Activated CD4-positive, alpha-beta T cell treated with anti-CD3 and anti-CD28 coated beads, Interleukin-2, amount 10 ng/mL, durations not matched to agents 24 days and 14 days (primary cell): ENCODE measurements at regions of chr12 and their contacts with region 1.

Region 1: GRCh38 chr12:2890388-2891239 is at the start of gene TULP3:
- DNase-seq: peak; percentile 99
- H3K4me3 Mint-ChIP-seq: peak within 1 kb of the TSS; percentile 99
- H3K27ac Mint-ChIP-seq: peak within 1 kb of the TSS; percentile 94
- H3K4me1 Mint-ChIP-seq: peaks cover 32% of the 10 kb centered on the region
- H3K27me3 Mint-ChIP-seq: peaks cover 3% of the 10 kb centered on the region
- total RNA-seq, gene TULP3: 7.6 and 7.8 TPM in 2 replicates

Region 2: GRCh38 chr12:2794736-2795289 is 95.8 kb before region 1 on chr12 and contains the start of gene FKBP4:
- intact Hi-C with region 1: loop called (anchors 1 kb)
- DNase-seq: peak; percentile 97
- H3K4me3 Mint-ChIP-seq: peak within 1 kb of the TSS; percentile 86
- H3K27ac Mint-ChIP-seq: peak within 1 kb of the TSS; percentile 79
- H3K4me1 Mint-ChIP-seq: peaks cover 28% of the 10 kb centered on the region
- H3K27me3 Mint-ChIP-seq: peaks cover 19% of the 10 kb centered on the region
- total RNA-seq, gene FKBP4: 300 and 311 TPM in 2 replicates

Region 3: DNA sequence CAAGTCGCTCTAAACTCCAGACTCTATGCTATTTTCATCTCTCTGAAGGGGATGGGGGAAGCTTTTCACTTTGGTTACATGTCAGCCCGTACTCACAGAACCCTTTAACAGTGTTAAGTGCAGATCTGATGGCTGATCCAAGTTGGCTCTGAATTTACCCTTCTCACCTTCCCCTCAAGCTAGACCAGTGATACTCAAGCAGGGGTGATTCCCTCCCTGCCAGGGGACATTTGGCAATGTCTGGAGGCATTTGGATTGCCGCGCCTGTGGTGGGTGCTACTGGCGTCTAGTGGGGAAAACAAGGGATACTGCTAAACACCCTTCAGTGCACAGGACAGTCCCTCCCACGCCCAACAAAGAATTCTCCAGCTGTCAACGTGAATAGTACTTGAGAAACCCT is 27.7 kb before region 1 on chr12:
- intact Hi-C with region 1: loop called (anchors 2 kb)
- DNase-seq: no peak
- H3K4me3 Mint-ChIP-seq: no peak overlapping the region
- H3K27ac Mint-ChIP-seq: no peak overlapping the region
- H3K4me1 Mint-ChIP-seq: peaks cover 4% of the 10 kb centered on the region
- H3K27me3 Mint-ChIP-seq: no peaks in the 10 kb centered on the region

Region 4: DNA sequence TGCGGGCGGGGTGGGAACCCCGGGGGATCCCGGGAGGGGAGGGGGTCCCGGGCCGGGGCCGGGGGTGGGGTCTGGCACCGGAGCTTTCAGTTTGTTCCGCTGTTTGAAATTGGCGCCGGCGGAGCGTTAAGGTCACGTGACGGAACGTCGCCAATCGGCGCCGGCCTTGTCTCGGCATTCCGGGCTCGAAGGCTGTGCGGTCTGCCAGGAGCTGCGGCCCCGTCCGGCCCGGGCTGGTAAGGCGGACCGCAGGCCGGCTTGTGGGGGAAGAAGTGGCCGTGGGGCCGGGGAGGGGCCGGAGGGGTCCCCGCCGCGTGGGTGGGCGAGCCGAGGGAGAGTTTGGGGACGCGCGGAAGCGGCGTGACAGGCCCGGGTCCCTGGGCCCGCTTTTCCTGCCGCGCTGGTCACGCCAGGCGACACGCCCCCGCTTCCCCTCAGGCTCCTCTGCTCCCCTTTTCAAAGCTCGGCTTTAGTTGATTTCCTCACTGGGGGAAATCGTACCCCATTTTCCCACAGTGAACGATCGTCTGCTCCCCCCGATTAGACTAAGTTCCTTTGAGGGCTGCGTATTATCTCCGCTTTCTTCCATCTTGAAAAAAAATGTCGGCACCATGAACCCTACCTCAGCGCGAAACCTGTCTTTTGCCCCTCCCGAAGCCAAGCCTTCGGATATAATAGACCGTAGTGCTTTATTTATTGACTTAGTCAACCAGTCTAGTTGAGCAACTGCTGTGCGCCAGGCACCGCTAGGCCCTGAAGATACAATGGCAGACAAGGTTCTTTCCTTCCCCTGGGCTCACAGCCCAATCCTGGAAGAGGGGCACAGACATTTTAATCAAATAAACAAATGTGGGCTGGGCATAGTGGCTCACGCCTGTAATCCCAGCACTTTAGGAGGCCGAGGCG is 13.3 kb before region 1 on chr12 and contains the starts of genes FOXM1 and RHNO1:
- intact Hi-C with region 1: loop called (anchors 1 kb)
- DNase-seq: peak; percentile 97
- H3K4me3 Mint-ChIP-seq: peak within 1 kb of the TSS; percentile 87
- H3K27ac Mint-ChIP-seq: peak within 1 kb of the TSS; percentile 98
- H3K4me1 Mint-ChIP-seq: peaks cover 44% of the 10 kb centered on the region
- H3K27me3 Mint-ChIP-seq: no peaks in the 10 kb centered on the region
- total RNA-seq, gene FOXM1: 73.7 and 74.0 TPM in 2 replicates
- total RNA-seq, gene RHNO1: 47.2 and 48.1 TPM in 2 replicates